ENCODE measurements at regions of chr4 and their contacts with region 1.

Region 1: DNA sequence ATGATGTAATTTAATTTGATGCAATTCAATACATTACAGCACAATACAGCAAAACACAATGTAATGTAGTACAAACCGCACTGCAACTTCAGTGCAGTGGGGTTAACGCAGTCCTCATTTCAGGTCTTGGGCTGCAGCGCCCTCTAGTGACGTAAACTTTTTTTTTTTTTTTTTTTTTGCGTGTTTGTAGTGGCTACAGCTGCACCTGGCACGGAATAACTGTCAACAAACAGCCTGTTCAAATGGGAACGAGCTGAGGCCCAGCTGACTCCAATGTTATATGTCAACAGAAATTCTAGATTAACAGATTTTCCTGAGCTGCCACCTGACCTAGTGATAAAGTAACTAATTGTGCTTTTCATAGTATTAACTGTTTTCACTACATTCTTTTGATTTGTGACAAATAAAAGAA is 33.5 kb upstream of the RASSF6 start:
- DNase-seq: peak; percentile 24
- H3K4me3 ChIP-seq: no peak overlapping the region
- H3K27ac ChIP-seq: no peak overlapping the region
- H3K27me3 ChIP-seq: no peaks in the 10 kb centered on the region
- CTCF ChIP-seq: peak; percentile 65

Region 2: GRCh38 chr4:73341454-73341853 is 312.2 kb before region 1 on chr4:
- CTCF ChIA-PET with region 1: interaction called, 36 read pairs
- POLR2A ChIA-PET with region 1: no interaction called
- DNase-seq: peak; percentile 4
- H3K4me3 ChIP-seq: no peak overlapping the region
- H3K27ac ChIP-seq: no peak overlapping the region
- H3K27me3 ChIP-seq: no peaks in the 10 kb centered on the region
- CTCF ChIP-seq: peak; percentile 61

Region 3: GRCh38 chr4:73573794-73574406 is 79.8 kb before region 1 on chr4:
- CTCF ChIA-PET with region 1: interaction called, 90 read pairs
- POLR2A ChIA-PET with region 1: no interaction called
- DNase-seq: peak; percentile 75
- H3K4me3 ChIP-seq: no peak overlapping the region
- H3K27ac ChIP-seq: no peak overlapping the region
- H3K27me3 ChIP-seq: peaks cover 3% of the 10 kb centered on the region
- CTCF ChIP-seq: peak; percentile 99

Region 4: GRCh38 chr4:73631565-73632226 is 22.0 kb before region 1 on chr4:
- CTCF ChIA-PET with region 1: no interaction called
- POLR2A ChIA-PET with region 1: no interaction called
- DNase-seq: no peak
- H3K4me3 ChIP-seq: no peak overlapping the region
- H3K27ac ChIP-seq: no peak overlapping the region
- H3K27me3 ChIP-seq: peaks cover 6% of the 10 kb centered on the region
- CTCF ChIP-seq: no peak

Region 5: GRCh38 chr4:73922766-73923630 is 269.3 kb after region 1 on chr4:
- CTCF ChIA-PET with region 1: interaction called, 13 read pairs
- POLR2A ChIA-PET with region 1: no interaction called
- DNase-seq: no peak
- H3K4me3 ChIP-seq: no peak overlapping the region
- H3K27ac ChIP-seq: no peak overlapping the region
- H3K27me3 ChIP-seq: no peaks in the 10 kb centered on the region
- CTCF ChIP-seq: peak; percentile 54

Region 6: DNA sequence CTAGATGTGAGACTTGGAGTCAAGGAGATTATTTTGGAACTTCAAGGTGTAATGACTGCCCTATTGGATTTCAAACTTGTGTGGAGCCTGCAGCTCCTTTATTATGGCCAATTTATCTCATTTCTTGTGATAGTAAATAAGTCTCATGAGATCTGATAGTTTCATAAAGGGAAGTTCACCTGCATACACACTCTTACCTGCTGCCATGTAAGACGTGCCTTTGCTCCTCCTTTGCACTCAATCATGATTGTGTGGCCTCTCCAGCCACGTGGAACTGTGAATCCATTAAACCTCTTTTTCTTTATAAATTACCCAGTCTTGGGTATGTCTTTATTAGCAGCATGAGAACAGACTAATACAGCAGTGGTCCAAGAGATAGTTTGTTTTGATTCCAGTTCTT is 309.0 kb after region 1 on chr4:
- CTCF ChIA-PET with region 1: no interaction called
- POLR2A ChIA-PET with region 1: no interaction called
- DNase-seq: no peak
- H3K4me3 ChIP-seq: no peak overlapping the region
- H3K27ac ChIP-seq: no peak overlapping the region
- H3K27me3 ChIP-seq: peaks cover 9% of the 10 kb centered on the region
- CTCF ChIP-seq: no peak